BJ (cell line): ENCODE measurements at regions of chr11 and their contacts with region 1.

Region 1: DNA sequence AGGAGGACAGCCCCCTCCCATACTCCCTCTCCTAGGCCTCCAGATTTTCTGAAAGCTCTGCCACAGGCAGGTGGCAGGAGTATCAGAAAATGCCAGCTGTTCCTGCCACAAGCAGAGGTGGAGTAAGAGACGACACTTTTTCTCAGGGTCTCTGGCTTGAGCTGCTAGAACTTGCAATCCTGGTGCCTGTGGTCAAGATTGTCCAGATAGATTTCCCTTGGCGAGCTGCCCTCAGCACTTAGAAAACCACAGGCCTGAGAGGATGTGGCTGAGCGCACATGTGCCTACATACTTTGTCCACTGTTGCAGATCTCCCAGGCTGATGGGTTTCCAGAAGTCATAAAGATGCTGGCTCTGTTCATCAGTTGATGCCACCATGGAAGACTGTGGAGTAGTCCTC is 65.7 kb upstream of the NAV2 start:
- DNase-seq: peak; percentile 95
- H3K4me3 ChIP-seq: no peak overlapping the region
- H3K27me3 ChIP-seq: peaks cover 7% of the 10 kb centered on the region
- CTCF ChIP-seq: peak; percentile 39

Region 2: GRCh38 chr11:19633276-19633675 is 13.6 kb before region 1 on chr11:
- CTCF ChIA-PET with region 1: interaction called, 11 read pairs
- POLR2A ChIA-PET with region 1: no interaction called
- DNase-seq: no peak
- H3K4me3 ChIP-seq: no peak overlapping the region
- H3K27me3 ChIP-seq: no peaks in the 10 kb centered on the region
- CTCF ChIP-seq: no peak

Region 3: DNA sequence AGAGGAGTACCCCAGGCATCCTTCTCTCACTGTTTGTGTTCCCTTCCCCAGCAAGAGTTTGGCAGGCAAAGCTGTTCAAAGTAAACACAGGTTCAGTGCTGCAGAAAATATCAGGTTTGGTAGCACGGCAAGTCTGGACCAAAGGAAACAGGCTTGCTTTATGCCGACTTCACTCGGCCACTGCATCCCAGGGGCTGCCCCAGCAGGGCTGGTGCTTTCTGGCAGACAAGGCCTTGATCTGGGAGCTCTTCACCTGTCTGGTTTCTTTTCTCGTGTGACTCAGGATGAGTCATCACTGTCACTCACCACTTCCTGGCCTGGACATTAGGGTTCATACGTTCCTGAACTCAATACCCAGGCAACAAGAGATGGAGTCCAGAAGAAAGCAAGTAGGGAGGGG is 13.2 kb after region 1 on chr11:
- CTCF ChIA-PET with region 1: interaction called, 13 read pairs
- POLR2A ChIA-PET with region 1: no interaction called
- DNase-seq: no peak
- H3K4me3 ChIP-seq: no peak overlapping the region
- H3K27me3 ChIP-seq: no peaks in the 10 kb centered on the region
- CTCF ChIP-seq: no peak

Region 4: GRCh38 chr11:19864141-19865140 is 217.5 kb after region 1 on chr11:
- CTCF ChIA-PET with region 1: no interaction called
- POLR2A ChIA-PET with region 1: no interaction called
- DNase-seq: no peak
- H3K4me3 ChIP-seq: no peak overlapping the region
- H3K27me3 ChIP-seq: no peaks in the 10 kb centered on the region
- CTCF ChIP-seq: no peak